HCT116 (cell line): ENCODE measurements at regions of chr4 and their contacts with region 1.

Region 1: DNA sequence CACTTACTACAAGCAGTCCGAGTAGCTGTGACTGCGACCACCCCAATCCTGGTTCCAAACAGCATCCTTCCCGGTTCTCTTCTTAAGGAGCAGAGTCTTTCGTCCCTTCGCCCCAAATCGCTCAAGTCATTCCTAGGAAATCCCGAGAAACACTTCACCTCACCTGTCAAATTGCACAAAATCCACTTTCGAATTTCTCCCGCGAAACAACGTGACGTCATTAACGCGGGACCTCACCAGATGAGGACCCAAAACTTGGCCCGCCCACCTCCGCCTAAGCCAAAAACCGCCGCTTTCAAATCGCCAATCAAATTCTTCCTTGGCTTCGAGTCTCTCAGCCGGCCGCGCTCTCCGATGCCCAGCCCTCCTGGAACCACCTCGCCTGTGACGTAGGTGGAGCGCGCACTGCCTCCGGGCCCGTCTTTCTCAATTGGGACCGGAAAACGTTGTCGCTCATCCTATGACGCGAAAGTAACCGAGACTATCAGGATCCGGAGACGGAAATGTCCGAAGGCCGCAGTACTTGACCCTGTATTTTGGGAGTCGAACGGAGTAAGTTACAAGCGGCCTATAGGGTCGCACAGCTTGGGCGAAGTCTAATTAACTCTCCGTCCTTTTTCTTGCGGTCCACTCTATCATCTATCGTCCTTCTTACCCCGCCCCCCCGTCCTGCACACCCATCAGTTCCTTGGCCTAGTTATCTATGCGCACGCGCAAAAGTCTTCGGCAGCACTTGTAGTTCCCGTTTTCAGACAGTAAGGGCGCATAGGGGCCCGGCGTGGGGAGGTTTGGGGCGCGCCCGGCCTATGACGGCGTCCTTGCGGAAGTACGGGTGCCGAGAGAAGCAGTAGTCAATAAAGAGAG is at the starts of genes LARP7 and ZGRF1:
- DNase-seq: peak; percentile 99
- ATAC-seq: peak; percentile 93
- H3K4me3 ChIP-seq: peak within 1 kb of the TSS; percentile 72 to 87
- H3K27ac ChIP-seq: peak within 1 kb of the TSS; percentile 66
- H3K4me1 ChIP-seq: peaks cover 3 to 17% of the 10 kb centered on the region in 2 experiments; a peak in 3 of 4 replicates
- H3K27me3 ChIP-seq: no peaks in the 10 kb centered on the region
- CTCF ChIP-seq: peak; percentile 18 to 67 (median 67); a peak in 4 of 6 replicates
- POLR2A ChIP-seq: peak; percentile 21
- RAD21 ChIP-seq: no peak
- total RNA-seq, gene LARP7: 39.5 TPM
- total RNA-seq, gene ZGRF1: 21.4 TPM

Region 2: DNA sequence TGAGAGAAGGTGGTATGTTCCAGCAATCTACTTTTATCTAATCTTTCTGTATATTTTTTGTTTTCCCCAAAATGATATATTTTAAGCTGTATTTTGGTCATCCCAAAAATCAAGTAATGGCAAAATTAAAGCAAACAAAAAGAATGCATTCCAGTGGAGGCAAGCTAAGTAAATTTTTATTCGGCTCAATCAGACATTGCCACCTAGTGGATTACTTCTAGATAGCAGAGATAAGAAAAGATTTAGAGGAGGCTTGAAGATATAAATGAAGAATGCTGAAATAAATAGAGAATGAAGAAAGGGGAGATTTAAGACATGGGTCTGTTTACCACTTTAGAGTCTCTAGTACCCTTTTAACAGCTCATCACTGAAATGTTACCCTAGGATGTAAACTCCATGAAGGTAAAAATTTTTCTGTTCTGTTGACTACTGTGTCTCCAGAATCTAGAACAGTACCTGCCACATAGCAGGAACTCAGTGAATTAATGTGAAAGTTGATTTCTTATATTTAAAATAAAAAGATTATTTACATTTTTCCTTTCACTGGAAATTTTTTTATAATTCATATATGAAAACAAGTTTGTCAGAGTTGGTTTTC is 301.6 kb after region 1 on chr4:
- CTCF ChIA-PET with region 1: no interaction called
- POLR2A ChIA-PET with region 1: no interaction called
- RAD21 ChIA-PET with region 1: no interaction called
- intact Hi-C with region 1: loop called (anchors 1 kb)
- DNase-seq: peak; percentile 31
- ATAC-seq: peak; percentile 59
- H3K4me3 ChIP-seq: no peak overlapping the region
- H3K27ac ChIP-seq: no peak overlapping the region
- H3K4me1 ChIP-seq: no peaks in the 10 kb centered on the region
- H3K27me3 ChIP-seq: no peaks in the 10 kb centered on the region
- CTCF ChIP-seq: peak; percentile 72 to 88 (median 86)
- POLR2A ChIP-seq: no peak
- RAD21 ChIP-seq: peak; percentile 81

Region 3: GRCh38 chr4:112951362-112952312 is 314.7 kb after region 1 on chr4:
- CTCF ChIA-PET with region 1: no interaction called
- POLR2A ChIA-PET with region 1: no interaction called
- RAD21 ChIA-PET with region 1: no interaction called
- intact Hi-C with region 1: loop called (anchors 5 kb)
- DNase-seq: no peak
- ATAC-seq: no peak
- H3K4me3 ChIP-seq: no peak overlapping the region
- H3K27ac ChIP-seq: no peak overlapping the region
- H3K4me1 ChIP-seq: no peaks in the 10 kb centered on the region
- H3K27me3 ChIP-seq: no peaks in the 10 kb centered on the region
- CTCF ChIP-seq: peak; percentile 32 to 66 (median 49); a peak in 5 of 6 replicates
- POLR2A ChIP-seq: no peak
- RAD21 ChIP-seq: 0 out of 2 replicates have a peak, but pooled peaks have one; percentile 10

Region 4: DNA sequence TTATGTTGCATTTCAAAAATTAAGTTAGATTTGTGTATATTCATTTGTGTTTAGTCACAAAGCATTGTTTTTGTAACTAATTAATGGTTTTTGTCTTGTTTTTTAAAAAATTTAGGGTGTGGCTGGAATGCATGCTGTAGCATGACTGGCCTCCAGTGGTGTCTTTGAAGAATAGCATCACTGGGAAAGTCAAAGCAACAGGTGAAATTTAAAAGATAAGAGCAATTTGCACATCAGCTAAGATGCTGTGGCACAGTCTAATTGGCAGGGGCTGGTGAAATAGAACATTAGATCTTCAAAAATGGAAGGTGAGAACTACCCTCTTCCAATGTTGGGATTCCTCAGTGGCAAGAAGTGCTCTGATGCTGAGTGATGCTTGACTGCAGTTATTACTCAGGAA is 457.9 kb after region 1 on chr4:
- CTCF ChIA-PET with region 1: no interaction called
- POLR2A ChIA-PET with region 1: no interaction called
- RAD21 ChIA-PET with region 1: no interaction called
- intact Hi-C with region 1: loop called (anchors 5 kb)
- DNase-seq: peak; percentile 19
- ATAC-seq: peak; percentile 60
- H3K4me3 ChIP-seq: no peak overlapping the region
- H3K27ac ChIP-seq: no peak overlapping the region
- H3K4me1 ChIP-seq: no peaks in the 10 kb centered on the region
- H3K27me3 ChIP-seq: no peaks in the 10 kb centered on the region
- CTCF ChIP-seq: peak; percentile 53 to 85 (median 70); a peak in 5 of 6 replicates
- POLR2A ChIP-seq: no peak
- RAD21 ChIP-seq: peak; percentile 77